ENCODE measurements at regions of chr14 and their contacts with region 1.

Region 1: GRCh38 chr14:34792598-34792997 is 78.2 kb upstream of the CFL2 start:
- DNase-seq: no peak
- H3K4me3 ChIP-seq: no peak overlapping the region
- H3K27ac ChIP-seq: no peak overlapping the region
- H3K4me1 ChIP-seq: no peaks in the 10 kb centered on the region
- CTCF ChIP-seq: no peak

Region 2: DNA sequence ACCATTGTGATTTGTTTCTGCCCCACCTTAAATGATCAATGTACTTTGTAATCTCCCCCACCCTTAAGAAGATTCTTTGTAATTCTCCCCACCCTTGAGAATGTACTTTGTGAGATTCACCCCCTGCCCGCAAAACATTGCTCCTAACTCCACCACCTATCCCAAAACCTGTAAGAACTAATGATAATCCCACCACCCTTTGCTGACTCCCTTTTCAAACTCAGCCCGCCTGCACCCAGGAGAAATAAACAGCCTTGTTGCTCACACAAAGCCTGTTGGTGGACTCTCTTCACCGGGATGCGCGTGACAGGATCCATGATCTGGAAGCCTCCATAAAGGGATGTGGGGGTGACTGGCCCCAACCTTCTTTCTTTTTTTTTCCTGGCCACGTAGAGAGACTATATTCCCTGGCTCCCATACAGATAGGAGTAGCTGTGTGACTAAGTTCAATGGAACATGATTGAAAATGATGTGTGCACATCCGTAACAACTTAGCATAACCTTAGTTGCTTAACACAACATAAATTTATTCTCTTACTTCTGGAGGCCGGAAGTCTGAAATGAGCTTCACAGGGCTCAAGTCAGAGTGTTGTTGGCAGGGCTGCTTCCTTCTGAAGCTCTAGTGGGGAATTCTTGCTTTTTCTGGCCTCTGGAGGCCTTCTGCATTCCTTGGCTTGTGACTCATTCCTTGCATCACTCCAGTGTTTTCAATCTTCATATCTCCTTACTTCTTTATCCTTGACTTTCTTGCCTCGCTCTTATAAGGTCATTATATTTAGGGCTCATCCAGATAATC is 142.0 kb before region 1 on chr14:
- CTCF ChIA-PET with region 1: no interaction called
- POLR2A ChIA-PET with region 1: no interaction called
- intact Hi-C with region 1: no loop called
- DNase-seq: no peak
- H3K4me3 ChIP-seq: no peak overlapping the region
- H3K27ac ChIP-seq: no peak overlapping the region
- H3K4me1 ChIP-seq: no peaks in the 10 kb centered on the region
- CTCF ChIP-seq: no peak

Region 3: GRCh38 chr14:34778744-34779143 is 13.9 kb before region 1 on chr14:
- CTCF ChIA-PET with region 1: no interaction called
- POLR2A ChIA-PET with region 1: interaction called, 5 read pairs
- intact Hi-C with region 1: loop called (anchors 1 kb)
- DNase-seq: no peak
- H3K4me3 ChIP-seq: no peak overlapping the region
- H3K27ac ChIP-seq: no peak overlapping the region
- H3K4me1 ChIP-seq: no peaks in the 10 kb centered on the region
- CTCF ChIP-seq: no peak

Measured in OCI-LY7 (cell line).